Ovary (tissue), 10 donors: ENCODE measurements at regions of chr16 and their contacts with region 1.

Region 1: GRCh38 chr16:35152067-35152627 is 1692.7 kb downstream of the TP53TG3F start:
- DNase-seq: peak in 1 of 5 donors; percentile 13
- H3K4me3 ChIP-seq: no peak overlapping the region
- H3K27ac ChIP-seq: no peak overlapping the region
- H3K4me1 ChIP-seq: no peaks in the 10 kb centered on the region
- H3K27me3 ChIP-seq: no peaks in the 10 kb centered on the region
- CTCF ChIP-seq: no peak
- EP300 ChIP-seq: no peak
- POLR2A ChIP-seq: no peak

Region 2: DNA sequence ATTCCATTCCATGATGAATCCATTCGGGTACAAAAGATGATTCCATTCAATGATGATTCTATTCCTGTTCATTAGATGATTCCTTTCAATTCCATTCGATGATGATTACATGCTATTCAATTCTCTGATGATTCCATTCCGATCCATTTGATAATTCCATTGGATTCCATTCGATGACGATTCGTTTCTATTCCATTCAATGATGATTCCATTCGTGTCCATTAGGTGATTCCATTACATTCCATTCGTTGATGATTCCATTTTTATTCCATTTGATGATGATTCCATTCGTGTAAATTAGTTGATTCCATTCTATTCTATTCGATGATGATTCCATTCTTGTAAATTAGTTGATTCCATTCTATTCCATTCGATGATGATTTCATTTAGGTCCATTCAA is 202.2 kb before region 1 on chr16:
- intact Hi-C with region 1: no loop called
- DNase-seq: no peak
- H3K4me3 ChIP-seq: no peak overlapping the region
- H3K27ac ChIP-seq: no peak overlapping the region
- H3K4me1 ChIP-seq: no peaks in the 10 kb centered on the region
- H3K27me3 ChIP-seq: no peaks in the 10 kb centered on the region
- CTCF ChIP-seq: no peak
- EP300 ChIP-seq: no peak
- POLR2A ChIP-seq: no peak

Region 3: DNA sequence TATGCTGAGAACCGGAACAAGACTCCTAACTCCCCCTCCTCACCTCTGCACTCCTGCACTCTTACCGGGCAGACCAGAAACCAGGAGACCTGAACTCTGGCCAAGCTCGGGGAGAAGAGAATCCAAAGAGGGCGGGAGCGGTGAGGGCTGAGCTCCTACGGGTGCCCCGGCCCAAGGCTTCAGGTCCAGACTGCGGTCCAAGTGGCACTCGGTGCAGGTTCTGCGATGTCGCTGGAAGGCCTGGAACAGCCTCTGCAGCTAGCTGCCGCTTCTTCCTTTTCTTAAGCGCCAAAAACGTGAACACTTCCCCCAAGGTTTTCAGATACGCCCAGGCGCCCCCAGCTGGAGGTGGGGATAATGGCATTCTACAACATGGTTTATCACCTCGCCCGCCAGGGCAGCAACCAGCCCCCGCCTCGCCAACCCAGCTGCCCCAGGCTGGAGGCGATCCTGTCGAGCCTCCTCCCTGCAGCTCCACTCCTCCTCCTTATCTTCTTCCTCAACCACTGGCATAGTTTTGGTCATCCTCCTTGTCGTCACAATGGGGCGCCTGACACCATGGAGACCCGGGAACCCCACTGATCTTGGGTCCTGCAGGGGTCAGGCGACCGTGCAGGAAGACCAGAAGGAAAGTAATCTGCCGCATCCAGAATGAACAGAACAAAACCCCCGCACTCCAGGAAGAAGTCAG is 43.2 kb after region 1 on chr16:
- intact Hi-C with region 1: loop called in 1 of 4 experiments (anchors 5 kb)
- DNase-seq: no peak
- H3K4me3 ChIP-seq: no peak overlapping the region
- H3K27ac ChIP-seq: no peak overlapping the region
- H3K4me1 ChIP-seq: no peaks in the 10 kb centered on the region
- H3K27me3 ChIP-seq: no peaks in the 10 kb centered on the region
- CTCF ChIP-seq: no peak
- EP300 ChIP-seq: no peak
- POLR2A ChIP-seq: no peak

Region 4: DNA sequence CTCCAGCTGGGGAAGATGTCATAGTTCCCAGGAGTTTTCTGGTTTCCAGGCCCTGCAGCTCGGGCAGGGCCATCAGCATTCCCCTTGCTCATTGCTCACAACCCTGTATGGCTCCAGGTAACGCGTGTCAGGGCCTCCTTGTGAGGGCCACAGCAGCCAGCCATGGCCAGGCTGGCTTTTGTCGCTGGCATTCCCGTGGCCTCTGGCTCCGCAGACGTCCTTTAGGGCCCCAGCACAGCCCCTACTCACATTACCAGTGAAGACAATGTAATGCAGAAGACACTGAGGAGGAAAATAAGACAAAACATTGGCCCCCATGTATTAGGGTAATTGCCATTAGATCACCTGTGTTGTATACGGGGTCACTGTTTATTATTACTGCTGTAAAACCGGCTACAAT is 106.2 kb after region 1 on chr16:
- intact Hi-C with region 1: no loop called
- DNase-seq: no peak
- H3K4me3 ChIP-seq: no peak overlapping the region
- H3K27ac ChIP-seq: no peak overlapping the region
- H3K4me1 ChIP-seq: no peaks in the 10 kb centered on the region
- H3K27me3 ChIP-seq: no peaks in the 10 kb centered on the region
- CTCF ChIP-seq: no peak
- EP300 ChIP-seq: no peak
- POLR2A ChIP-seq: no peak